GM10248 (cell line): ENCODE measurements at regions of chr2 and their contacts with region 1.

Region 1: DNA sequence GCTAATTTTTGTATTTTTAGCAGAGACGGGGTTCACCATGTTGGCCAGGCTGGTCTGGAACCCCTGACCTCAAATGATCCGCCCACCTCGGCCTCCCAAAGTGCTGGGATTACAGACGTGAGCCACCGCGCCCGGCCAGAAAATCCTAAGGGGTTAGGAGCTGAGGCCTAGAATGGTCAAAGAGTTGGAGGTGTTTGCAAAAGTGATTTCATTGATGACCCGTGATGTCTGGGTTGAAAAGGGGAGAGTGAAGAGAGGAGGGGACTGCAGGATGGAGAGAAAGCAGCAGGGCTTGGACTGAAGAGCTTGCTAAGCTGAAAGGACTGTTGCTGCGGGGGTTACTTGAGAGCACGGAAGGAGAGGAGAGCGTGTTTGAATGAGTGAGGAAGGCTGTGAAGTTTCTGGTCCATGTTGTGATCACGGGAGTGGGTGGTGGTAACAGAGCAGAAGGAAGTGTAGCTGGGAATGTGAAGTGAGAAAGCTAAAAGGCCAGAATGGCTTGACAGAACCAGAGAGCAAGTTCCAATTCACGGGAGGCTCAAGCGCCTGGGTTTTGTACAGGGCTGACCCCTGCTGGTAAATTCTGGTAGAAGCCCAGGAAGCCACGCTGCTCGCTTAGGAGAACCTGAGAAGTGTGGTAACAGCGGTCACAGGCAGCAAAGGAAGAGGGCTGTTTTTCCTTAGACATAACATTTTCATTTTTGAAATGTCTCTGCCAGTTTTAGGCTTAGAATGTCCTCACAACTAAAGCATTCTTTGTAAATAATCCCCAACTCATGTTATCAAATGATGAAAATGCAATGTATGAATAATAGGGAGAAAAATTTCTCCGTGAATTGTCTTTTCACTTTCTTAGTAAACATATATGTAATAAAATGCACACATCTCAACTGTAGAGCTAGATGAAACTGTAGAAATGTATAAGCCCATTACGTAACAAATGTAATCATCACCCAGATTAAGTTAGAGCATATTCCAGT is 40.5 kb upstream of the ACTR2 start:
- DNase-seq: peak; percentile 86
- CTCF ChIP-seq: peak; percentile 80

Region 2: DNA sequence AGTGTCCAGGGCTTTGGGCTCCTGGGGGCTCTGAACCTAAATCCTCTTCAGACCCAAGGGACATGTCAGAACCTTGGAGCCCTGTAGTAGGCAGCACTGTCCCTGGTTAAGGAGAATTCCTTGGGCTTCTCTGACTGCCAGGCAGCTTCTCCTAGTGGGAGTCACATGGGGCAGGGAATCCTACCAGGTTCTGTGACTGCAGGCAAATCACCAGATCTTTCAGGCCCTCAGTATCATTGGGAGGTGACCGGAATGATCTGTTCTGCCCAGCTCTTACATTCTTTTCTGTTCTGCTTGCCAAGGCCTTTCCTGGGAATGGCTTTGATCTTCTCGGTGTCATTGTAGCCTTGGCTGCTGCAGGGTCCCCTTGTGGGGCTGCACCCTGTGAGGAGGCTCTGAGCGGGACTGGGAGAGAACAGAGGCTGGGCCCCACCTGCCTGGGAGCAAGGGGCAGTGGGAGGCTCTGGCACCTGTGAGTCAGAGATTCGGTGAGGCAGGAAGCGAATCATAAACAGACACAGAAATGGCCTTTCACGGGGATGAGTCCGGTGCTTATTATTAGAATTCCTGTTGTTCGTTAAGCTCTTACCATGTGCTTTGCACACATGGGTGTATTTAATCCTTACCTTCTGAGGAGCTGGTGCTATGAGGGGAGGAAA is 116.9 kb before region 1 on chr2:
- CTCF ChIA-PET with region 1: interaction called, 41 read pairs
- POLR2A ChIA-PET with region 1: no interaction called
- DNase-seq: no peak
- CTCF ChIP-seq: no peak

Region 3: GRCh38 chr2:65169760-65170136 is 17.4 kb before region 1 on chr2:
- CTCF ChIA-PET with region 1: interaction called, 10 read pairs
- POLR2A ChIA-PET with region 1: no interaction called
- DNase-seq: no peak
- CTCF ChIP-seq: no peak

Region 4: GRCh38 chr2:65198737-65199136 is 11.6 kb after region 1 on chr2:
- CTCF ChIA-PET with region 1: interaction called, 20 read pairs
- POLR2A ChIA-PET with region 1: no interaction called
- DNase-seq: no peak
- CTCF ChIP-seq: no peak

Region 5: DNA sequence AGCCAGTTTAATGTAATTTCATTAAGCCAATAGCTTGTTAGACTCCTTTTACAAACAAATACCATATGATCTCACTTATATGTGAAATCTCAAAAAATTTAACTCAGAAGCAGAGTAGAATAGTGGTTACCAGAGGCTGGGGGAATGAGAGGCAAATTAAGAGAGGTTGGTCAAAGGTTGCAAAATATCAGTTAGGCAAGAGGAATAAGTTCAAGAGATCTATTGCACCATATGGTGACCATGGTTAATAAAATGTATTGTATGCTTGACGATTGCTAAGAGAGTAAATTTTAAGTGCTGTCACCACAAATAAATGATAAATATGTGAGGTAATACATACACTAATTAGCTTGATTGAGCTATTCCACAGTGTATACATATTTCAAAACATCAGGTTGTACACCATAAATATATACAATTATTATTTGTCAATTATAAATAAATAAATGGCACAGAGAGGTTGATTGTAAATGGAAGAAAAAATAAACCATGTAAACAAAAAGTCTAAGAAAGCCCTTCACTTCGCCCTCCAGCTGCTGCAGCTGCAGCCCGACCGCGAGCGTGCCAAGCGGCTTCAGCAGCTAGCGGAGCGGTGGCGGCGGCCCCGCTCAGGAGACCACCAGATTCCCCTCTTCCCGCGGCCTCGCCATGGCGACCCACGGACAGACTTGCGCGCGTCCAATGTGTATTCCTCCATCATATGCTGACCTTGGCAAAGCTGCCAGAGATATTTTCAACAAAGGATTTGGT is 17.5 kb after region 1 on chr2:
- CTCF ChIA-PET with region 1: interaction called, 20 read pairs
- POLR2A ChIA-PET with region 1: no interaction called
- DNase-seq: no peak
- CTCF ChIP-seq: no peak